Activated CD8-positive, alpha-beta T cell treated with anti-CD3 and anti-CD28 coated beads for 36 hours (primary cell): ENCODE measurements at regions of chr5 and their contacts with region 1.

Region 1: GRCh38 chr5:178279725-178280438 is 47.3 kb upstream of the PHYKPL start:
- DNase-seq: peak; percentile 80
- ATAC-seq: peak; percentile 83
- H3K4me3 Mint-ChIP-seq: no peak overlapping the region
- H3K27ac Mint-ChIP-seq: no peak overlapping the region
- H3K4me1 Mint-ChIP-seq: peaks cover 4% of the 10 kb centered on the region
- H3K27me3 Mint-ChIP-seq: no peaks in the 10 kb centered on the region
- CTCF ChIP-seq: peak; percentile 93

Region 2: DNA sequence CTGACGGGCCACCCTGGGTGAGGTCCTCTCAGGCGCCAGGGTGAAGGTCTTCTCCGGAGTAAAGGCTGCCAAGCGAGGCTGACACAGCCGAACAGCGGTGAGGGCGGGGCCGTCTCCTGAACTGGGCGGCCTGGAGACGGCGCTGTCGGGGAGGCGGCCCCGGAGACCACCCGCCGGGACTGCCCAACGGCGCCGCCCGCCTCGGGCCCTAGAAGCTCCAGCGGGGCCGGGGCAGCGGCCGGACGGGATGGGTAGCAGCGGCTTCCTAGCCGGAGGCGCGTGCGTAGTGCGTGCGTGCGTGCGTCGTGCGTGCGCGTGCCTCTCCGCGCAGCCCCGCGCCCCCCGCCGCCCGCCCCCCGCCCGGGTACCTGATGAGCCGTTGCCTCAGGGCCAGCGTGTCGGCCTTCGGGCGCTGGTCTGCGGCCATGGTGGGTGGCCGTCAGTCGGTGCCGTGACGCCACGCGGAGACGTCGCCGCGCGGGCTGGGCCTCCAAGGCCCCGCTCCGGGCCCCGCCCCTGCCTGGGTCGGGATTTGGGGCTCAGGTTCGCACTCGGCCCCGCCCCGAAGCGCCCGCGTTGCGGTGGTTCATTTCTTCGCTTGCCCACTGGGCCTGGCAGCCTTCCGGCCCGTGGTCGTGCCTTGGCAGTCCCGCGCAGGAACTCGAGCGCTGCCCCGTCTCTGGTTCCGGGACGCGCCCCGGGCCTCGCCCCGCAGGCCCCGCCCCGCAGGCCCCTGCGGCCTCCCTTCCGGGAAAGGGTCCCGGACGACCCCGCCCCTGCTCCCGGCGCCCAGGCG is 47.6 kb before region 1 on chr5 and contains the start of gene PHYKPL:
- CTCF ChIA-PET with region 1: interaction called, 16 read pairs
- POLR2A ChIA-PET with region 1: interaction called, 3 read pairs
- intact Hi-C with region 1: no loop called
- DNase-seq: peak; percentile 74
- ATAC-seq: peak; percentile 64
- H3K4me3 Mint-ChIP-seq: peak within 1 kb of the TSS; percentile 91
- H3K27ac Mint-ChIP-seq: peak within 1 kb of the TSS; percentile 87
- H3K4me1 Mint-ChIP-seq: peaks cover 58% of the 10 kb centered on the region
- H3K27me3 Mint-ChIP-seq: no peaks in the 10 kb centered on the region
- CTCF ChIP-seq: no peak
- total RNA-seq, gene PHYKPL: 60.4 to 62.1 TPM

Region 3: GRCh38 chr5:178350361-178351220 is 70.7 kb after region 1 on chr5:
- CTCF ChIA-PET with region 1: no interaction called
- POLR2A ChIA-PET with region 1: no interaction called
- intact Hi-C with region 1: no loop called
- DNase-seq: no peak
- ATAC-seq: no peak
- H3K4me3 Mint-ChIP-seq: no peak overlapping the region
- H3K27ac Mint-ChIP-seq: no peak overlapping the region
- H3K4me1 Mint-ChIP-seq: no peaks in the 10 kb centered on the region
- H3K27me3 Mint-ChIP-seq: peaks cover 2% of the 10 kb centered on the region
- CTCF ChIP-seq: no peak

Region 4: GRCh38 chr5:178461004-178461730 is 181.3 kb after region 1 on chr5:
- CTCF ChIA-PET with region 1: interaction called, 14 read pairs
- POLR2A ChIA-PET with region 1: no interaction called
- intact Hi-C with region 1: no loop called
- DNase-seq: peak; percentile 77
- ATAC-seq: peak; percentile 91
- H3K4me3 Mint-ChIP-seq: no peak overlapping the region
- H3K27ac Mint-ChIP-seq: no peak overlapping the region
- H3K4me1 Mint-ChIP-seq: no peaks in the 10 kb centered on the region
- H3K27me3 Mint-ChIP-seq: no peaks in the 10 kb centered on the region
- CTCF ChIP-seq: peak; percentile 84

Region 5: GRCh38 chr5:178590141-178590923 is 310.4 kb after region 1 on chr5 and contains the start of gene COL23A1:
- CTCF ChIA-PET with region 1: interaction called, 14 read pairs
- POLR2A ChIA-PET with region 1: no interaction called
- intact Hi-C with region 1: no loop called
- DNase-seq: peak; percentile 65
- ATAC-seq: peak; percentile 81
- H3K4me3 Mint-ChIP-seq: peak within 1 kb of the TSS; percentile 46
- H3K27ac Mint-ChIP-seq: no peak within 1 kb of the TSS
- H3K4me1 Mint-ChIP-seq: peaks cover 6% of the 10 kb centered on the region
- H3K27me3 Mint-ChIP-seq: peaks cover 40% of the 10 kb centered on the region
- CTCF ChIP-seq: peak; percentile 75
- total RNA-seq, gene COL23A1: 0.11 TPM in 1 of 2 experiments, not detected in the other